Activated B cell treated with CpG ODN at 0.5 μM for 24 hours (primary cell): ENCODE measurements at regions of chr13 and their contacts with region 1.

Region 1: GRCh38 chr13:40666045-40666904 is at the start of gene FOXO1:
- DNase-seq: peak; percentile 94
- ATAC-seq: peak; percentile 69
- H3K4me3 Mint-ChIP-seq: peak within 1 kb of the TSS; percentile 93
- H3K27ac Mint-ChIP-seq: peak within 1 kb of the TSS; percentile 94
- H3K4me1 Mint-ChIP-seq: peaks cover 40% of the 10 kb centered on the region
- H3K27me3 Mint-ChIP-seq: no peaks in the 10 kb centered on the region
- CTCF ChIP-seq: no peak
- total RNA-seq, gene FOXO1: 47.5 and 50.4 TPM in 2 replicates

Region 2: GRCh38 chr13:39037880-39038568 is 1628.3 kb before region 1 on chr13 and contains the starts of genes NHLRC3 and PROSER1:
- CTCF ChIA-PET with region 1: no interaction called
- POLR2A ChIA-PET with region 1: no interaction called
- intact Hi-C with region 1: loop called (anchors 5 kb)
- DNase-seq: peak; percentile 73
- ATAC-seq: peak; percentile 78
- H3K4me3 Mint-ChIP-seq: peak within 1 kb of the TSS; percentile 87
- H3K27ac Mint-ChIP-seq: peak within 1 kb of the TSS; percentile 99
- H3K4me1 Mint-ChIP-seq: peaks cover 47% of the 10 kb centered on the region
- H3K27me3 Mint-ChIP-seq: no peaks in the 10 kb centered on the region
- CTCF ChIP-seq: no peak
- total RNA-seq, gene NHLRC3: 17.3 and 24.6 TPM in 2 replicates
- total RNA-seq, gene PROSER1: 57.3 and 57.8 TPM in 2 replicates

Region 3: DNA sequence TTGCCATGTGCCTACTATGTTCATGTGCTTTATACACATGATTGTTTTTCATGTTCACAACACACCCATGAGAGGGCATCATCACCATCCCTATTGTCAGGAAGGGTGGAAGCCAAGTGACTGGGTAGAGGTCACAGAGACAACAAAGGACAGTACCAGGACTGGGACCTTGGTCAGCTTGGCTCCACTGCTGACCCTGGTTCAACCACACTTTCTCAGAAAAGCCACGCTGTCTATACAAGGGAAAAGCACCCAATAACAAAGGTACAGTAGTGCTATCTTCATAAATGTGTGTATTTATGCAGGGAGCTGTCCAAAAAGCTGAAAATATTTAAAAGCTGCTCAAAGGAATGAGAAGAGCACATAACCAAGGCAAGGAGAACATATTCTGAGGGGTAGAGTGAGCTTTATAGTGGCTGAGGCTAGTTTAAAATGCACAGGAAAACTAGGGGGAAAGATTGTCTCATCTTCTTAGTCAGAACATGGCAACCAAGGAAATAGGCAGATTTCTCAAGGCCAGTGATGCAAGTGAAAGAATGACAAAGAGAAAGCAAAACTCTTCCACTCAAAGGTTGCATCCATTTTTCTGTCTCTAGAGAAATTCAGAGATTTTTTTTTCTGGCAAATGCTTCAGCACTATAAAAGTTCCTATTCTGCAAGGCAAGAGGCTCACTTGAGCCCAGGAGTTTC is 414.8 kb before region 1 on chr13:
- CTCF ChIA-PET with region 1: no interaction called
- POLR2A ChIA-PET with region 1: no interaction called
- intact Hi-C with region 1: loop called (anchors 1 kb)
- DNase-seq: no peak
- ATAC-seq: peak; percentile 69
- H3K4me3 Mint-ChIP-seq: no peak overlapping the region
- H3K27ac Mint-ChIP-seq: peak overlapping the region; percentile 27
- H3K4me1 Mint-ChIP-seq: peaks cover 12% of the 10 kb centered on the region
- H3K27me3 Mint-ChIP-seq: no peaks in the 10 kb centered on the region
- CTCF ChIP-seq: no peak

Region 4: GRCh38 chr13:40401911-40402776 is 264.1 kb before region 1 on chr13:
- CTCF ChIA-PET with region 1: no interaction called
- POLR2A ChIA-PET with region 1: interaction called, 6 read pairs
- intact Hi-C with region 1: loop called (anchors 1 kb)
- DNase-seq: peak; percentile 51
- ATAC-seq: peak; percentile 100
- H3K4me3 Mint-ChIP-seq: peak overlapping the region; percentile 71
- H3K27ac Mint-ChIP-seq: peak overlapping the region; percentile 82
- H3K4me1 Mint-ChIP-seq: peaks cover 29% of the 10 kb centered on the region
- H3K27me3 Mint-ChIP-seq: no peaks in the 10 kb centered on the region
- CTCF ChIP-seq: no peak

Region 5: GRCh38 chr13:40597740-40598370 is 68.4 kb before region 1 on chr13:
- CTCF ChIA-PET with region 1: interaction called, 3 read pairs
- POLR2A ChIA-PET with region 1: interaction called, 10 read pairs
- intact Hi-C with region 1: loop called (anchors 2 kb)
- DNase-seq: no peak
- ATAC-seq: no peak
- H3K4me3 Mint-ChIP-seq: peak overlapping the region; percentile 28
- H3K27ac Mint-ChIP-seq: peak overlapping the region; percentile 76
- H3K4me1 Mint-ChIP-seq: peaks cover 93% of the 10 kb centered on the region
- H3K27me3 Mint-ChIP-seq: no peaks in the 10 kb centered on the region
- CTCF ChIP-seq: no peak

Region 6: DNA sequence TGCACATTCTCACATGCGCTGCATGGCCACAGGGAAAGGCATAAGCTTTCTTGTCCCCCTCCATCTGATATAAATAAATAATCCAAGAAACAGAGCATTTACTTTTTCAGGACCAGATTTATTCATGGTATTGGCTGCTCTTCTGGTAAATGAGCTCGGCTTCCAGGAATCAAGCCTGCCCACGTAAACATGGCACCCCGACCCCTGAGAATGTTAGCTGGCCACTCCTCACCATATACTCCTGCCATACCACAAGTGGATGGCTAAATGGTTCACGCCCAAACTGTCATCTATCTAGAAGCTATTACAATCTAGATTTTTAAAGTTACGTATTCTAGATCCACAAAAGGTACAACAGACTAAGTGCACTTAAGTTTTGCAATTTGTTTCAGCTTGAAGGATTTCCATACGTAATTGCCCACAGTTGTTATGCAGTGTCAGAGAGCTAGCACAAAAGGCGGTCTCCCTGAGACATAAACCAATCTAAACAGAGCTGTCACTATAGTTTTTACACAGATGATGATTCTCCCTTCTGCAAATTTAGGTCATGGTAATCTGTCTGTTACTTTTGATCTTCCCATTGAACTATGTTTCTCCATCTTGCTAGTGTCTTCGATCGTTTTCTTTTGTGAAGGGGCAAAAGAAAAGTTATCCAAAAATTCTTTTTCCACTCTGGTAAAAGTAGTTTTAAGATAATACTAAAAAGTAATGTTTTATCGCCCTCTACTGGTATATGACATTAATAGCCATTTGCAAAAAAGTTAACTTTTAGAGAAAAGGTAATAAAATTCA is 16.4 kb after region 1 on chr13:
- CTCF ChIA-PET with region 1: interaction called, 25 read pairs
- POLR2A ChIA-PET with region 1: interaction called, 7 read pairs
- intact Hi-C with region 1: loop called (anchors 2 kb)
- DNase-seq: no peak
- ATAC-seq: no peak
- H3K4me3 Mint-ChIP-seq: no peak overlapping the region
- H3K27ac Mint-ChIP-seq: no peak overlapping the region
- H3K4me1 Mint-ChIP-seq: peaks cover 24% of the 10 kb centered on the region
- H3K27me3 Mint-ChIP-seq: no peaks in the 10 kb centered on the region
- CTCF ChIP-seq: no peak

Region 7: GRCh38 chr13:41061075-41061913 is 395.0 kb after region 1 on chr13 and contains the start of gene WBP4:
- CTCF ChIA-PET with region 1: no interaction called
- POLR2A ChIA-PET with region 1: no interaction called
- intact Hi-C with region 1: loop called (anchors 5 kb)
- DNase-seq: peak; percentile 91
- ATAC-seq: peak; percentile 75
- H3K4me3 Mint-ChIP-seq: peak within 1 kb of the TSS; percentile 100
- H3K27ac Mint-ChIP-seq: peak within 1 kb of the TSS; percentile 100
- H3K4me1 Mint-ChIP-seq: peaks cover 39% of the 10 kb centered on the region
- H3K27me3 Mint-ChIP-seq: peaks cover 2% of the 10 kb centered on the region
- CTCF ChIP-seq: no peak
- total RNA-seq, gene WBP4: 8.6 and 9.0 TPM in 2 replicates

Region 8: GRCh38 chr13:41145146-41145908 is 479.1 kb after region 1 on chr13:
- CTCF ChIA-PET with region 1: no interaction called
- POLR2A ChIA-PET with region 1: no interaction called
- intact Hi-C with region 1: no loop called
- DNase-seq: no peak
- ATAC-seq: no peak
- H3K4me3 Mint-ChIP-seq: no peak overlapping the region
- H3K27ac Mint-ChIP-seq: no peak overlapping the region
- H3K4me1 Mint-ChIP-seq: no peaks in the 10 kb centered on the region
- H3K27me3 Mint-ChIP-seq: no peaks in the 10 kb centered on the region
- CTCF ChIP-seq: no peak